SK-N-SH (cell line): ENCODE measurements at regions of chr3 and their contacts with region 1.

Region 1: DNA sequence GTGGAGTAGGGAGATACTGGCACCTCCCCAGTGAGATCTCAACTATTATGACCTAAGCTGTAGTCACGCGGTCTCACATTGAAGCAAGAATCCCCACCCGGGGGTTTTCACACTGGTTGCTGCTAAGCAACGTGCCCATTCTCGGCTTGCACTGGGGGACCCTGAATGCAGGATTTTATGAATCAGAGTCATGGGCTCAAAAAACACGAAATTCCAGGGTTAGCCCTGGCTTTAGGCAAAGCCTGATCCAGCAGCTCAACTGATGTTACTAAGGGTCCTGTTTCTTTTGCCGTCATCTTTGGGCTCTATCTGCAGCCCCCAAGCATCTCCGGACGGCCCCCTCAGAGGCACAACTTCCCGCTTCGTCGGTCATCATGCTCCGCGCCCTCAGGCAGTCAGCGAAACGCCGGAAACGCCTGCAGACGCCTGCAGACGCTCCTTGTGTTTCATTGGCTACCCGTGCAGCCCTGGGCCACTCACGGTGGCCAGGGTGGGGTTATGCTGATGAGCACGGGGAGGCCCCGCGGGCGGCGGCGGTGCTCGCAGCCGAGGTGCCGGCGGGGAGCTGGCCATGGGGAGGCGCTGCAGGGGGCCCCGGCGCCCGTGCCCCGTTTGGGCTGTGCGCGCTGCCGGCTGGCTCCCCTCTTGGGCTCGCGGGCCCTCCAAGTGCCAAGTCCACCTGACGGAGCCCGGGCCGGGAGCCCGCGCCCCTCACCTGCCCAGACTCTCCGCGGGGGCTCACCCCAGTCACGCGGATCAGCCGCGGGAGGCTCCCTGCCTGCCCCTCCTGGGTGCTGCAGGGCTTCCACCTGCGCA is 25.8 kb downstream of the EFCC1 start:
- DNase-seq: peak; percentile 96
- H3K4me3 ChIP-seq: peak overlapping the region; percentile 37 to 59
- H3K27ac ChIP-seq: no peak overlapping the region
- H3K4me1 ChIP-seq: peaks cover 0 to 10% of the 10 kb centered on the region in 2 experiments; a peak in 1 of 4 replicates
- H3K27me3 ChIP-seq: no peaks in the 10 kb centered on the region; the same call in 1 of the 2 replicates
- CTCF ChIP-seq: peak; percentile 68
- EP300 ChIP-seq: no peak
- RAD21 ChIP-seq: no peak

Region 2: GRCh38 chr3:128080320-128081080 is 946.4 kb before region 1 on chr3:
- CTCF ChIA-PET with region 1: no interaction called
- POLR2A ChIA-PET with region 1: no interaction called
- DNase-seq: no peak
- H3K4me3 ChIP-seq: no peak overlapping the region
- H3K27ac ChIP-seq: peak overlapping the region; percentile 39 to 85
- H3K4me1 ChIP-seq: peaks cover 0 to 18% of the 10 kb centered on the region in 2 experiments; a peak in 3 of 4 replicates
- H3K27me3 ChIP-seq: no peaks in the 10 kb centered on the region
- CTCF ChIP-seq: no peak
- EP300 ChIP-seq: 0 out of 4 replicates have a peak, but pooled peaks of 1 of the 2 experiments have one; percentile 50
- RAD21 ChIP-seq: no peak

Region 3: GRCh38 chr3:128895843-128896697 is 130.9 kb before region 1 on chr3:
- CTCF ChIA-PET with region 1: no interaction called
- POLR2A ChIA-PET with region 1: no interaction called
- DNase-seq: no peak
- H3K4me3 ChIP-seq: no peak overlapping the region
- H3K27ac ChIP-seq: no peak overlapping the region
- H3K4me1 ChIP-seq: no peaks in the 10 kb centered on the region
- H3K27me3 ChIP-seq: no peaks in the 10 kb centered on the region
- CTCF ChIP-seq: no peak
- EP300 ChIP-seq: no peak
- RAD21 ChIP-seq: no peak

Region 4: GRCh38 chr3:129039271-129040038 is 12.5 kb after region 1 on chr3:
- CTCF ChIA-PET with region 1: interaction called, 13 read pairs
- POLR2A ChIA-PET with region 1: no interaction called
- DNase-seq: peak; percentile 88
- H3K4me3 ChIP-seq: no peak overlapping the region; a peak in 1 of 4 replicates
- H3K27ac ChIP-seq: peak overlapping the region in 1 of 2 experiments; percentile 43; a peak in 1 of 4 replicates
- H3K4me1 ChIP-seq: peaks cover 0 to 15% of the 10 kb centered on the region in 2 experiments; a peak in 1 of 4 replicates
- H3K27me3 ChIP-seq: peaks cover 5% of the 10 kb centered on the region; the same call in 1 of the 2 replicates
- CTCF ChIP-seq: no peak
- EP300 ChIP-seq: no peak
- RAD21 ChIP-seq: no peak

Region 5: GRCh38 chr3:129695230-129695629 is 668.3 kb after region 1 on chr3:
- CTCF ChIA-PET with region 1: no interaction called
- POLR2A ChIA-PET with region 1: no interaction called
- DNase-seq: no peak
- H3K4me3 ChIP-seq: no peak overlapping the region
- H3K27ac ChIP-seq: no peak overlapping the region
- H3K4me1 ChIP-seq: no peaks in the 10 kb centered on the region; a peak in 3 of 4 replicates
- H3K27me3 ChIP-seq: no peaks in the 10 kb centered on the region
- CTCF ChIP-seq: no peak
- EP300 ChIP-seq: no peak
- RAD21 ChIP-seq: no peak